Left lung (tissue), 14 donors: ENCODE measurements at regions of chr21 and their contacts with region 1.

Region 1: DNA sequence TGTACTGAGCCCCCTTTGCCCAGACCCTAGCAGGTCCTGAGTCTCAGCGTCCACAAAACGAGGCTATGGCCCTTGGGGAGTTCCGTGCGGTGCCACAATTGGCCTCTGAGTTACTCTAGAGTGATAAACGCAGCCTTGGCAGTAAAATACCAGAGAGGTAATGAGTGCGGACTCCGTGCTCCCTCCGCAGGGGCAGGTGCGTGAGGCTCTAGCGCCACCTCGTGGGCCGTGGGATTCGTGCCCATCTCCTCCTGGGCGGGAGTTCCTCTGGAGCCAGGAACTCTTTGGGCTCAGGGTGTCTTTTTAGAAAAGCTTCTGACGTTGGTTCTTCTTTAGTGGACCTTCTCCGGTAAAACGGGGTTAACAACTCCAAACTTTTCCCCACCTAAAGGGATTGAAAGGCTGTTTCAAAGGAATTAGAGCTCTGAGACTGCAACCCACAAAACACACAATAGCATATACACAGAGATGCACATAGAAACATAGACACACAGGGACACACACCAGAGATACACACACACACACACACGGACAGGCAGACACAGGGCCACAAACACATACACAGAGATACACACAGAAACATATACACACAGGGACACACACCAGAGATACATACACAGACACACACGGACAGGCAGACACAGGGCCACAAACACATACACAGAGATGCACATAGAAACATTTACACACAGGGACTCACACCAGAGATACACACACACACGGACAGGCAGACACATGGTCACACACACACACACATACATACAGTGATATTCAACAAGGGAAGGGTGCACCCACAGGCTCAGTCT is 99.4 kb downstream of the KCNJ15 start:
- DNase-seq: peak; percentile 68 to 97 (median 81)
- ATAC-seq: peak; percentile 79
- H3K4me3 ChIP-seq: no peak overlapping the region
- H3K27ac ChIP-seq: peak overlapping the region in 1 of 2 donors; percentile 33
- H3K4me1 ChIP-seq: peaks cover 18 to 30% of the 10 kb centered on the region in 2 donors
- H3K27me3 ChIP-seq: no peaks in the 10 kb centered on the region
- CTCF ChIP-seq: peak; percentile 94 to 95

Region 2: GRCh38 chr21:38165466-38166172 is 190.6 kb before region 1 on chr21:
- intact Hi-C with region 1: loop called in 1 of 2 experiments (anchors 5 kb)
- DNase-seq: peak in 2 of 4 donors; percentile 36 to 37
- ATAC-seq: no peak
- H3K4me3 ChIP-seq: no peak overlapping the region
- H3K27ac ChIP-seq: no peak overlapping the region
- H3K4me1 ChIP-seq: peaks cover 3 to 6% of the 10 kb centered on the region in 2 donors
- H3K27me3 ChIP-seq: no peaks in the 10 kb centered on the region
- CTCF ChIP-seq: no peak

Region 3: GRCh38 chr21:38223893-38224540 is 132.2 kb before region 1 on chr21:
- intact Hi-C with region 1: loop called in 1 of 2 experiments (anchors 5 kb)
- DNase-seq: no peak
- ATAC-seq: no peak
- H3K4me3 ChIP-seq: no peak overlapping the region
- H3K27ac ChIP-seq: peak overlapping the region in 1 of 2 donors; percentile 60
- H3K4me1 ChIP-seq: peaks cover 6 to 46% of the 10 kb centered on the region in 2 donors
- H3K27me3 ChIP-seq: no peaks in the 10 kb centered on the region
- CTCF ChIP-seq: no peak